A549 (cell line): ENCODE measurements at regions of chr7 and their contacts with region 1.

Region 1: DNA sequence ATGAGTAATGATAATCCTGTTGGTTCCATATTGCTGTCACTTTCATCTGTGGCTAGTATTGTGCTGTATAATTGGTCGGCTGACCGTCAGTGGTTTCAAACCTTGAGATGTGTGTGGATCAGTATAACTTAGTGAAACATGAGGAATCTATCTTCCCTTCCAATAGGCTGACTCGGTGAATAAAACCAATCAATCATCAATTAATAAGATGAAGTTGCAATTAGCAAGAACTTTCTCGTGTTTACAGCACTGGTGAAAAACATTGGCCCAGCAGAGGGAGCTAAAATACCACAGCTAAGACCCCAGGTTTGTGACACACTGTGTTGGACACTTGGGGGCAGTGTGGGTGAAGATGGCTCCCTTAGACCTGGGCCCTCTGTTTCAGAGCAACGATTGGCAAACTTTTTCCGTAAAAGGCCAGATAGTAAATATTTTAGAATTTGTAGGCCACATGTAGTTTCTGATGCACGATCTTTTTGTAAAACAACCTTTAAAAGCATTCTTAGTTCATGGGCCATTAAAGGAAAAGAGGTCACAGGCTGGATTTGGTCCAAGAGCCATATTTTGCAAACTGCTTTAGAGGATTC is 47.8 kb downstream of the STRA8 start:
- DNase-seq: peak; percentile 83 to 85
- ATAC-seq: peak; percentile 91 to 97
- H3K4me3 ChIP-seq: no peak overlapping the region
- H3K27ac ChIP-seq: peak overlapping the region; percentile 44 to 45; a peak in 5 of 6 replicates
- H3K4me1 ChIP-seq: peaks cover 6% of the 10 kb centered on the region; the same call in 2 of the 3 replicates
- CTCF ChIP-seq: peak; percentile 100
- EP300 ChIP-seq: no peak
- POLR2A ChIP-seq: no peak
- RAD21 ChIP-seq: peak; percentile 100

Region 2: DNA sequence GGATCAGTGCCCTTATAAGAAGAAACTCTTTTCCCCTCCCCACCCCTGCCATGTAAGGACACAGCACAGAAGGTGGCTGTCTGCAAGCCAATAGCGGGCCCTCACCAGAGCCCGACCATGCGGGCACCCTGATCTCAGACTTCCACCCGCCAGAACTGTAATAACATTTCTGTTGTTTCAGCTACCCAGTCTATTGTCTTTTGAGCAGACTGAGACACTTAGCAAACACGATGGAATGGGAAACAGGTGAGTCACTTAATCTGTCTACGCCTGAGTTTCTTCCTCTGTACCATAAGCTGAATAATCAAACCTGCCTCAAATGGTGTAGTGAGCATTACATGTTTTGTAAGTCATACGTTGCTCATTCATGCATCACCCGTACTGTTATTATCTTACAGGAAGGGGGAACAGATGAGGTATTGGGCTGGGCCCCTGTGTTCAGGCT is 10.4 kb after region 1 on chr7:
- CTCF ChIA-PET with region 1: interaction called, 20 read pairs
- POLR2A ChIA-PET with region 1: no interaction called
- DNase-seq: peak; percentile 62 to 91
- ATAC-seq: peak; percentile 96 to 97
- H3K4me3 ChIP-seq: no peak overlapping the region
- H3K27ac ChIP-seq: peak overlapping the region; percentile 81 to 95
- H3K4me1 ChIP-seq: peaks cover 25% of the 10 kb centered on the region
- CTCF ChIP-seq: no peak
- EP300 ChIP-seq: peak in 1 of 2 experiments; percentile 55; a peak in 1 of 5 replicates
- POLR2A ChIP-seq: no peak
- RAD21 ChIP-seq: no peak

Region 3: DNA sequence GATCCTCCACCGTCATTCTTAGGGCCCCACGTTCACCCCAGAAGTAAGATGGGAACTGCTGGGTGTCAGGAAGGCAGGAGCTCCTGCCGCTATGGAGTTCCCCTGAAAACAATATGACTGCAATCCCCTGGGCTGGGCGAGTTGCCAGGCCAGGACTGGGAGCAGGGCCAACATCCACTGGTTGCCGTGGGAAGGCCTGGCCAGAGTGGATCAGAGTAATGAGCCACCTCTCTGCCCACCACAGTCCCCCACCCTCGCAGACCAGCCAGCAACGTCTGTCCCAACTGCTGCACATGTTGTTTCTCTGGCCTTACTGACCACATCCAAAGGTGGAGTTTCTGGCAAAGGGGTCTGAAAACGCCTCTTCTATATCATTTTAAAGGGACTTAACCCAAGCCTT is 38.8 kb after region 1 on chr7:
- CTCF ChIA-PET with region 1: interaction called, 35 read pairs
- POLR2A ChIA-PET with region 1: no interaction called
- DNase-seq: peak in 1 of 2 experiments; percentile 44
- ATAC-seq: peak; percentile 53 to 78; a peak in 4 of 6 replicates
- H3K4me3 ChIP-seq: no peak overlapping the region
- H3K27ac ChIP-seq: peak overlapping the region; percentile 40 to 44; a peak in 3 of 6 replicates
- H3K4me1 ChIP-seq: peaks cover 8% of the 10 kb centered on the region
- CTCF ChIP-seq: no peak
- EP300 ChIP-seq: no peak
- POLR2A ChIP-seq: no peak
- RAD21 ChIP-seq: no peak

Region 4: GRCh38 chr7:135335628-135336139 is 54.2 kb after region 1 on chr7:
- CTCF ChIA-PET with region 1: interaction called, 388 read pairs
- POLR2A ChIA-PET with region 1: interaction called, 7 read pairs
- DNase-seq: peak; percentile 69 to 81
- ATAC-seq: peak; percentile 92 to 97
- H3K4me3 ChIP-seq: no peak overlapping the region
- H3K27ac ChIP-seq: peak overlapping the region; percentile 28 to 43; a peak in 2 of 6 replicates
- H3K4me1 ChIP-seq: peaks cover 8% of the 10 kb centered on the region; the same call in 1 of the 3 replicates
- CTCF ChIP-seq: peak; percentile 69
- EP300 ChIP-seq: no peak
- POLR2A ChIP-seq: no peak
- RAD21 ChIP-seq: peak; percentile 93 to 94

Region 5: GRCh38 chr7:135380351-135380750 is 98.9 kb after region 1 on chr7:
- CTCF ChIA-PET with region 1: interaction called, 13 read pairs
- POLR2A ChIA-PET with region 1: no interaction called
- DNase-seq: no peak
- ATAC-seq: no peak
- H3K4me3 ChIP-seq: no peak overlapping the region
- H3K27ac ChIP-seq: no peak overlapping the region
- H3K4me1 ChIP-seq: no peaks in the 10 kb centered on the region
- CTCF ChIP-seq: no peak
- EP300 ChIP-seq: no peak
- POLR2A ChIP-seq: no peak
- RAD21 ChIP-seq: no peak

Region 6: DNA sequence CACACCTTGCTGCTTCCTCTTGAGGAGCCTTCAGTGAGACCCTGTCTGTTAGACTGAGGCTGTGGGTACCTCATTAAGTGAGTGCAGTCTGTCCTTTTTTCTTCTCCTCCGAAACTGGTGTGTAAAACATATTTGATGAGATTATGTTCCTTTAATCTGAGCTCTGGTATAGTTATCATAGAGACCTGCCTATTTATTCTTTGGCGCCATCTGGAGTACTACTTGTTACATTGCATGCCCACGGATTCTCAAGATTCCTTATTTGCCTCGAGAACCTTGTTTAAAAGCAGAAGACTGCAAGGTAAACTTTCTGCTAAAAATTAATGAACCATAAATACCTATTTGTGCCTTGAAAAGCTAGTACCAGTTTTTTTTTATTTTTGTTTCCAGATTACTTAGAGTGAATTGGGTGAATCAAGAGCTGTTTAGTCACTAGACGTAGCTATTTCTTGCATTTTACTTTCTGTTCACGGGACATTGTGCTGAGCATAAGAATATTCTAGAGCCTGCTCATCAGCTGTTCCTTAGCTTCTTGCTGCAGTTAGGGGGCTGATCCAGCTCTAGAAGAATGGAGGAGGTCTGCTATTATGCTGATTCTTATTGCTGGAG is 363.9 kb after region 1 on chr7:
- CTCF ChIA-PET with region 1: interaction called, 176 read pairs
- POLR2A ChIA-PET with region 1: no interaction called
- DNase-seq: peak; percentile 32 to 55
- ATAC-seq: peak; percentile 84 to 89; a peak in 5 of 6 replicates
- H3K4me3 ChIP-seq: no peak overlapping the region
- H3K27ac ChIP-seq: no peak overlapping the region
- H3K4me1 ChIP-seq: no peaks in the 10 kb centered on the region
- CTCF ChIP-seq: peak; percentile 83
- EP300 ChIP-seq: no peak
- POLR2A ChIP-seq: no peak
- RAD21 ChIP-seq: peak; percentile 40 to 61; a peak in 4 of 5 replicates